PC-9 (cell line): ENCODE measurements at regions of chr15 and their contacts with region 1.

Region 1: GRCh38 chr15:92881802-92882696 is 18.1 kb upstream of the CHD2 start:
- DNase-seq: peak; percentile 97 to 98
- H3K4me3 ChIP-seq: peak overlapping the region; percentile 58
- H3K27ac ChIP-seq: peak overlapping the region; percentile 74
- H3K4me1 ChIP-seq: peaks cover 42% of the 10 kb centered on the region
- H3K27me3 ChIP-seq: no peaks in the 10 kb centered on the region
- CTCF ChIP-seq: no peak

Region 2: GRCh38 chr15:92803847-92804609 is 78.0 kb before region 1 on chr15:
- CTCF ChIA-PET with region 1: interaction called, 4 read pairs
- POLR2A ChIA-PET with region 1: interaction called, 19 read pairs
- intact Hi-C with region 1: loop called (anchors 1 kb)
- DNase-seq: peak; percentile 92 to 100
- H3K4me3 ChIP-seq: no peak overlapping the region; the same call in 1 of the 2 replicates
- H3K27ac ChIP-seq: peak overlapping the region; percentile 98
- H3K4me1 ChIP-seq: peaks cover 57% of the 10 kb centered on the region
- H3K27me3 ChIP-seq: no peaks in the 10 kb centered on the region
- CTCF ChIP-seq: no peak

Region 3: DNA sequence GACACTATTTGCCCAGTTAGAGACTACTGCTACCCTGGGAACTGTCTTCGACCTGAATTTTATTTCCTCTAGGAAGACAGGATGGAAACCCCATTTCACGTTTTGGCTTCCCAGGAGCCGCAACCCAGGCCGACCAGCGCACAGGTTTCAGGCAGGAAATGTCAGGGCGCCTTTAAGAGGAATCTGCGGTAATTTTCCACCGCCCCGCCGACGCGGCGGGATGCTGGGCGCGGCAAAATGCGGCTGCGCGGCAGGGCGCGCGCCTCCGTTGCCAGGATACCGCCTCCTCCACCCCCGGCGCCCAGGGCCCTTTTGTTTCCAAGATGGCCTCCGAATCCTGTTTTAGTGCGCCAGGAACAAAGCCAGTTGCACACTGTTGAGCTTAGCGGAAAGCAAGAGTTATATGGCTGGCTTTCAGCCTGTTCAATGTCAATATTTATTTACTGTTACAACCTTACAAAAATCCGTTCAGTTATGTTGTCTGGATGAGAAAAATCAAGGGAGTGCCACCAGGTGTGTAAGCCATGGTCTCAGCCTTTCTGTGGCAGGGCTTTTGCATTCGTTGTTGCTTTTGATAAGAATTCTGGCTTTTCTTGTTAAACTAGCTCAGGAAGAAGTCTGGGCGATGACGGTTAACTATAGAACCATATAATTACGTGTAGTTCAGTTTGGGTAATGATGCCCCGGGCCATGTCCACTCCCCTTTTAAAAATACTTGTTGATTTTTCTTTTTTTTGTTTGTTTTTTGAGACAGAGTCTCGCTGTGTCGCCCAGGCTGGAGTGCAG is 61.6 kb before region 1 on chr15:
- CTCF ChIA-PET with region 1: interaction called, 3 read pairs
- POLR2A ChIA-PET with region 1: interaction called, 19 read pairs
- intact Hi-C with region 1: loop called (anchors 1 kb)
- DNase-seq: peak; percentile 91 to 96
- H3K4me3 ChIP-seq: peak overlapping the region; percentile 56
- H3K27ac ChIP-seq: peak overlapping the region; percentile 96
- H3K4me1 ChIP-seq: peaks cover 57% of the 10 kb centered on the region
- H3K27me3 ChIP-seq: no peaks in the 10 kb centered on the region
- CTCF ChIP-seq: no peak

Region 4: GRCh38 chr15:92839696-92840095 is 42.4 kb before region 1 on chr15:
- CTCF ChIA-PET with region 1: no interaction called
- POLR2A ChIA-PET with region 1: interaction called, 4 read pairs
- intact Hi-C with region 1: loop called (anchors 1 kb)
- DNase-seq: no peak
- H3K4me3 ChIP-seq: no peak overlapping the region
- H3K27ac ChIP-seq: peak overlapping the region; percentile 72
- H3K4me1 ChIP-seq: peaks cover 28% of the 10 kb centered on the region
- H3K27me3 ChIP-seq: no peaks in the 10 kb centered on the region
- CTCF ChIP-seq: no peak

Region 5: GRCh38 chr15:92868992-92869988 is 12.8 kb before region 1 on chr15:
- CTCF ChIA-PET with region 1: interaction called, 10 read pairs
- POLR2A ChIA-PET with region 1: interaction called, 7 read pairs
- intact Hi-C with region 1: no loop called
- DNase-seq: peak; percentile 41 to 92
- H3K4me3 ChIP-seq: no peak overlapping the region
- H3K27ac ChIP-seq: peak overlapping the region; percentile 74
- H3K4me1 ChIP-seq: peaks cover 33% of the 10 kb centered on the region
- H3K27me3 ChIP-seq: no peaks in the 10 kb centered on the region
- CTCF ChIP-seq: no peak